A673 (cell line): ENCODE measurements at regions of chr11 and their contacts with region 1.

Region 1: GRCh38 chr11:12973528-12974181 is 35.5 kb upstream of the RASSF10 start:
- DNase-seq: no peak
- H3K4me3 ChIP-seq: no peak overlapping the region
- H3K27ac ChIP-seq: no peak overlapping the region
- H3K4me1 ChIP-seq: no peaks in the 10 kb centered on the region
- H3K27me3 ChIP-seq: no peaks in the 10 kb centered on the region
- CTCF ChIP-seq: no peak

Region 2: DNA sequence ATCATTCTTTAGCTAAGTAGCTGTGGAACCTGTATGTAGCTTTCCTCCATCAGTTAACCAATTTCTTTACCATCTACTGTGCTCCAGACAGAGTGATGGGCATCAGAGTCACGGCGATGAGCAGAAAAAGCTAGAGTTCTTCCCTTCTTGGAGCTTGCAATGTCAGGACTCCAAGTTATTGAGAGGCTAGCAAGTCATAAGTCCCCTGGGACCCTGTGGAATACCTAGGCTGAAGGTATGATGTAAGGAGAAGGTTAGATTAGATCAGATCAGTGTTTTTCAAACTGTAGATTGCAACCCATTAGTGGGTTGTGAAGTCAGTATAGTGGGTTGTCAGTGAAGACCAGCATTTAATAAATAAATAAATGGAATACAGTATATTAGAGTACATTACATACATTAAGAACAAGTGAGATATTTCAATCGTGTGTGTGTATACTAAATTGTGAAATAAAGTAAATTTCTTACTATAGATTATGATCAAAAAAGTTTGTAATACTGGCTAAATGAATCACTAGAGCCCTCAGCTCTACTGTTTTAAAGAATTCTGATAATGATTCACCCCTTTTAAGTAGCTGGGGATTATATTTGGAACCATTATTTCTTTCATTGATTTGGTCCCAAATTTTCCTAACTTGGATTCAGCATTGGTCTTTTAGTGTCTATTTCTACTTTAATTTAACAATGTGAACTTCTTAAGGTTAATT is 87.8 kb after region 1 on chr11:
- CTCF ChIA-PET with region 1: no interaction called
- POLR2A ChIA-PET with region 1: interaction called, 10 read pairs
- intact Hi-C with region 1: no loop called
- DNase-seq: no peak
- H3K4me3 ChIP-seq: no peak overlapping the region
- H3K27ac ChIP-seq: no peak overlapping the region
- H3K4me1 ChIP-seq: no peaks in the 10 kb centered on the region
- H3K27me3 ChIP-seq: peaks cover 31% of the 10 kb centered on the region
- CTCF ChIP-seq: no peak